ENCODE measurements at regions of chr19 and their contacts with region 1.

Region 1: GRCh38 chr19:4023600-4024398 is 16.3 kb downstream of the PIAS4 start:
- DNase-seq: peak in 3 of 5 donors; percentile 50 to 60 (median 59)
- ATAC-seq: peak; percentile 21 to 80 (median 52)
- H3K4me3 ChIP-seq: peak overlapping the region in 4 of 12 donors; percentile 5 to 20 (median 12)
- H3K27ac ChIP-seq: peak overlapping the region in 11 of 12 donors; percentile 1 to 78 (median 56)
- H3K4me1 ChIP-seq: peaks cover 0 to 28% (median 6%) of the 10 kb centered on the region in 12 donors
- H3K27me3 ChIP-seq: no peaks in the 10 kb centered on the region
- CTCF ChIP-seq: no peak
- POLR2A ChIP-seq: peak in 1 of 2 donors; percentile 20

Region 2: GRCh38 chr19:3783660-3784584 is 239.9 kb before region 1 on chr19:
- intact Hi-C with region 1: no loop called
- DNase-seq: no peak
- ATAC-seq: peak in 3 of 4 donors; percentile 8 to 38 (median 29)
- H3K4me3 ChIP-seq: no peak overlapping the region
- H3K27ac ChIP-seq: no peak overlapping the region
- H3K4me1 ChIP-seq: peaks cover 0 to 17% (median 0%) of the 10 kb centered on the region in 12 donors
- H3K27me3 ChIP-seq: peaks cover 6 to 52% (median 27%) of the 10 kb centered on the region in 9 donors
- CTCF ChIP-seq: peak in 11 of 12 donors; percentile 11 to 46 (median 24)
- POLR2A ChIP-seq: no peak

Region 3: GRCh38 chr19:4058034-4058692 is 34.4 kb after region 1 on chr19:
- intact Hi-C with region 1: loop called in 5 of 10 experiments (anchors 5 kb)
- DNase-seq: peak; percentile 83 to 93 (median 89)
- ATAC-seq: peak; percentile 64 to 71 (median 70)
- H3K4me3 ChIP-seq: peak overlapping the region in 10 of 12 donors; percentile 10 to 84 (median 60)
- H3K27ac ChIP-seq: peak overlapping the region; percentile 87 to 99 (median 98)
- H3K4me1 ChIP-seq: peaks cover 17 to 76% (median 60%) of the 10 kb centered on the region in 12 donors
- H3K27me3 ChIP-seq: no peaks in the 10 kb centered on the region
- CTCF ChIP-seq: peak in 3 of 12 donors; percentile 13 to 22 (median 20)
- POLR2A ChIP-seq: peak in 1 of 2 donors; percentile 9